Esophagus muscularis mucosa (tissue), 4 donors: ENCODE measurements at regions of chr5 and their contacts with region 1.

Region 1: DNA sequence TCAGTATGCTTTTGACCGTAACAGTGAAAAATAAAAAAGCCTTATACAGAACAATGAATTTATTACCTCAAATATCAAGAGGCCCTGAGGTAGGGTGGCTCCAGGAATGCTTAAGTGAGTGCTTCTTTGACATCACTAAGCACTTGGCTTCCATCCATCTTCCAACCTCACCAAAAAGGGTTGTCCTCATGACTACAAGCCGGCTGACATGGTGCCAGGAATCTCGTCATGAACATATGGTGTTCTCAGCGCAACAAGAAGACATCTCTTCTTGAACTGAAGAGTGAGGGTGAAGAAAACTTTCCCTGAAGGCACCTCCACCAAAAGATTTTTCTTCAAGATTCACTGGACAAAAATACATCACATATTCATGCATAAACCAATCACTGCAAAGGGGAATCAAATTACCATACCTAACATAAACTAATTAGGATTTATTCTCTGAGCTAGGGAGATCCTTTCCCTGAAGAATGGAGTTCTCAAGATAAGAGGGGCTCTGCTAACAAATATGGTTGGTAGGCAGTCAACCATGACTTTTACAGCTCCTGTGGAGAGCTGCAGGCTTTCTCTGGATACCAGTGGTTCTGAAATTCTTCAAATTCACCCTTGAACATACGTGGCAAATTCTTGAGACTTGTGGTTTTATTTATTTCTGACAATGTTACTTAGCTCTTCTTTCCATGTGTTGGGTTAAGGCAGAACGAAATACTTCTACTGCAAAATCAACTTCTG is 49.5 kb downstream of the AGXT2 start:
- DNase-seq: no peak
- H3K4me3 ChIP-seq: no peak overlapping the region
- H3K27ac ChIP-seq: no peak overlapping the region
- H3K4me1 ChIP-seq: no peaks in the 10 kb centered on the region
- H3K27me3 ChIP-seq: peaks cover 0 to 8% (median 0%) of the 10 kb centered on the region in 4 donors
- CTCF ChIP-seq: no peak
- EP300 ChIP-seq: no peak
- POLR2A ChIP-seq: no peak

Region 2: DNA sequence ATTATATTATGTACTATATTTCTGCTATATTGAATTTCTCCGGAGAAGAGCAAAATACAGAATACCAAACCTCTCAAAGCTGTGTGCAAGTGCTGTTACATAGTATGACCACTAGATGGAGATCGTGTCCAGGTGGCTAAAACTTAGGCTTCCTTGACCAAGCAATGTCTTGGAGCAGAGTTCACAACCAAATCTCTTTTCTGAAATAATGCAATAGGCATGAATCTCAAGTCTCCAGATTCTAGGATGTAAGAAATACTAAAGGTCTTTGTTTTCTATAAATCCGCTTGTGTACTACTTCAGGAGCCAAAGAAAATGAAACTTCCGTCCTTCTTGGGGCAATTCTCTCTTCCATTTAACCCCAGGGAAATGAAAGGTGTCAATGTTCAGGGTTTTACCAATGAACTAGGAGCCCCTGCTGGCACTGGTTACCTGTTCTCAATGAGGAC is 523.6 kb before region 1 on chr5:
- intact Hi-C with region 1: loop called (anchors 5 kb)
- DNase-seq: no peak
- H3K4me3 ChIP-seq: no peak overlapping the region
- H3K27ac ChIP-seq: no peak overlapping the region
- H3K4me1 ChIP-seq: no peaks in the 10 kb centered on the region
- H3K27me3 ChIP-seq: peaks cover 0 to 7% (median 0%) of the 10 kb centered on the region in 4 donors
- CTCF ChIP-seq: peak in 2 of 3 experiments; percentile 93 to 95
- EP300 ChIP-seq: no peak
- POLR2A ChIP-seq: no peak